Calu3 (cell line): ENCODE measurements at regions of chr3 and their contacts with region 1.

Region 1: GRCh38 chr3:146747928-146748327 is 142.8 kb upstream of the PLSCR5 start:
- DNase-seq: peak; percentile 20
- H3K4me3 Mint-ChIP-seq: no peak overlapping the region
- H3K27ac Mint-ChIP-seq: no peak overlapping the region
- H3K4me1 Mint-ChIP-seq: no peaks in the 10 kb centered on the region
- H3K27me3 Mint-ChIP-seq: no peaks in the 10 kb centered on the region
- CTCF ChIP-seq: no peak

Region 2: GRCh38 chr3:146715170-146715569 is 32.8 kb before region 1 on chr3:
- CTCF ChIA-PET with region 1: no interaction called
- intact Hi-C with region 1: no loop called
- DNase-seq: no peak
- H3K4me3 Mint-ChIP-seq: no peak overlapping the region
- H3K27ac Mint-ChIP-seq: no peak overlapping the region
- H3K4me1 Mint-ChIP-seq: peaks cover 9% of the 10 kb centered on the region
- H3K27me3 Mint-ChIP-seq: no peaks in the 10 kb centered on the region
- CTCF ChIP-seq: no peak

Region 3: GRCh38 chr3:146732325-146732724 is 15.6 kb before region 1 on chr3:
- CTCF ChIA-PET with region 1: no interaction called
- intact Hi-C with region 1: loop called (anchors 2 kb)
- DNase-seq: no peak
- H3K4me3 Mint-ChIP-seq: no peak overlapping the region
- H3K27ac Mint-ChIP-seq: no peak overlapping the region
- H3K4me1 Mint-ChIP-seq: no peaks in the 10 kb centered on the region
- H3K27me3 Mint-ChIP-seq: no peaks in the 10 kb centered on the region
- CTCF ChIP-seq: no peak